ENCODE measurements at regions of chr4 and their contacts with region 1.

Region 1: GRCh38 chr4:7904952-7905915 is 34.4 kb downstream of the AFAP1 start:
- DNase-seq: peak in 1 of 2 donors; percentile 53
- ATAC-seq: peak; percentile 44 to 75 (median 65)
- H3K4me3 ChIP-seq: peak overlapping the region in 1 of 10 donors; percentile 17
- H3K27ac ChIP-seq: peak overlapping the region in 9 of 10 donors; percentile 23 to 68 (median 52)
- H3K4me1 ChIP-seq: peaks cover 3 to 82% (median 41%) of the 10 kb centered on the region in 9 donors
- H3K27me3 ChIP-seq: no peaks in the 10 kb centered on the region
- CTCF ChIP-seq: no peak

Region 2: GRCh38 chr4:7770224-7771050 is 134.8 kb before region 1 on chr4:
- intact Hi-C with region 1: no loop called
- DNase-seq: no peak
- ATAC-seq: no peak
- H3K4me3 ChIP-seq: no peak overlapping the region
- H3K27ac ChIP-seq: no peak overlapping the region
- H3K4me1 ChIP-seq: peaks cover 0 to 14% (median 0%) of the 10 kb centered on the region in 9 donors
- H3K27me3 ChIP-seq: no peaks in the 10 kb centered on the region
- CTCF ChIP-seq: peak; percentile 27 to 70 (median 53)

Region 3: GRCh38 chr4:7827991-7828720 is 77.1 kb before region 1 on chr4:
- intact Hi-C with region 1: no loop called
- DNase-seq: peak; percentile 42 to 90
- ATAC-seq: peak; percentile 81 to 93 (median 91)
- H3K4me3 ChIP-seq: peak overlapping the region in 1 of 10 donors; percentile 11
- H3K27ac ChIP-seq: peak overlapping the region; percentile 50 to 93 (median 86)
- H3K4me1 ChIP-seq: peaks cover 20 to 72% (median 56%) of the 10 kb centered on the region in 9 donors
- H3K27me3 ChIP-seq: no peaks in the 10 kb centered on the region
- CTCF ChIP-seq: no peak

Region 4: GRCh38 chr4:7867701-7868435 is 37.4 kb before region 1 on chr4:
- intact Hi-C with region 1: loop called in 1 of 10 experiments (anchors 5 kb)
- DNase-seq: no peak
- ATAC-seq: no peak
- H3K4me3 ChIP-seq: no peak overlapping the region
- H3K27ac ChIP-seq: peak overlapping the region in 1 of 10 donors; percentile 52
- H3K4me1 ChIP-seq: peaks cover 0 to 20% (median 15%) of the 10 kb centered on the region in 9 donors
- H3K27me3 ChIP-seq: peaks cover 0 to 2% (median 0%) of the 10 kb centered on the region in 7 donors
- CTCF ChIP-seq: no peak

Measured in heart right ventricle (tissue), 16 donors.